GM12878 (cell line): ENCODE measurements at regions of chr18 and their contacts with region 1.

Region 1: DNA sequence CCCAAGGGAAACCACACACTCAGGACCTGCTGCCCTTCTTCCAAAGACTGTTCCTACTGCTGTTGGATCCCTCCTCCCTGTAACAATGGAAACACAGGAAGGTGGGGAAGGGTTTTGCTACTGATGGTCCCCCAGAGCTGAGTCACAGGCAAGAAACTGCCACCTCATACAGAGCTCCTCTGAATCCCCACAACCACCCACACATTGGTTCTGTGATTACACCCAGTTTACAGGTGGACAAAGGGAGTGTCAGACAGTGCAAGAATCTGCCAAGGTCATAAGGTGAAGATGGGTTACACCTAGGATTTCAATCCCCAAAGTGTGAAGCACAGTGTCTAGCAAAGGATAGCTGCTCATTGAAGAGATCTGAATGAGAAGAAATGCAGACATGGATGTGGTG is 141.7 kb upstream of the LMAN1 start:
- DNase-seq: no peak
- ATAC-seq: no peak
- H3K4me3 ChIP-seq: no peak overlapping the region
- H3K27ac ChIP-seq: no peak overlapping the region
- H3K4me1 ChIP-seq: no peaks in the 10 kb centered on the region
- H3K27me3 ChIP-seq: peaks cover 0 to 2% of the 10 kb centered on the region in 2 experiments; a peak in 1 of 4 replicates
- CTCF ChIP-seq: no peak
- EP300 ChIP-seq: no peak
- POLR2A ChIP-seq: no peak
- RAD21 ChIP-seq: no peak

Region 2: GRCh38 chr18:60090170-60090569 is 589.4 kb after region 1 on chr18:
- CTCF ChIA-PET with region 1: no interaction called
- POLR2A ChIA-PET with region 1: interaction called, 10 read pairs
- RAD21 ChIA-PET with region 1: no interaction called
- SMC1A ChIA-PET with region 1: no interaction called
- in situ Hi-C with region 1: no loop called
- intact Hi-C with region 1: no loop called
- DNase-seq: no peak
- ATAC-seq: peak; percentile 68
- H3K4me3 ChIP-seq: no peak overlapping the region
- H3K27ac ChIP-seq: no peak overlapping the region
- H3K4me1 ChIP-seq: no peaks in the 10 kb centered on the region
- H3K27me3 ChIP-seq: no peaks in the 10 kb centered on the region; a peak in 1 of 4 replicates
- CTCF ChIP-seq: peak; percentile 21 to 33 (median 27); a peak in 2 of 6 replicates
- EP300 ChIP-seq: no peak
- POLR2A ChIP-seq: no peak
- RAD21 ChIP-seq: peak; percentile 46